ENCODE measurements at regions of chr2 and their contacts with region 1.

Region 1: GRCh38 chr2:60881047-60881932 is at the start of gene REL:
- DNase-seq: peak; percentile 80 to 98 (median 89)
- ATAC-seq: peak; percentile 78
- H3K4me3 ChIP-seq: peak within 1 kb of the TSS; percentile 85 to 99
- H3K4me3 Mint-ChIP-seq: peak within 1 kb of the TSS; percentile 93
- H3K27ac ChIP-seq: peak within 1 kb of the TSS; percentile 97 to 100
- H3K27ac Mint-ChIP-seq: peak within 1 kb of the TSS; percentile 99
- H3K4me1 ChIP-seq: peaks cover 34% of the 10 kb centered on the region
- H3K4me1 Mint-ChIP-seq: peaks cover 30% of the 10 kb centered on the region
- H3K27me3 ChIP-seq: no peaks in the 10 kb centered on the region
- H3K27me3 Mint-ChIP-seq: no peaks in the 10 kb centered on the region
- CTCF ChIP-seq: no peak
- total RNA-seq, gene REL: 202 to 205 TPM

Region 2: DNA sequence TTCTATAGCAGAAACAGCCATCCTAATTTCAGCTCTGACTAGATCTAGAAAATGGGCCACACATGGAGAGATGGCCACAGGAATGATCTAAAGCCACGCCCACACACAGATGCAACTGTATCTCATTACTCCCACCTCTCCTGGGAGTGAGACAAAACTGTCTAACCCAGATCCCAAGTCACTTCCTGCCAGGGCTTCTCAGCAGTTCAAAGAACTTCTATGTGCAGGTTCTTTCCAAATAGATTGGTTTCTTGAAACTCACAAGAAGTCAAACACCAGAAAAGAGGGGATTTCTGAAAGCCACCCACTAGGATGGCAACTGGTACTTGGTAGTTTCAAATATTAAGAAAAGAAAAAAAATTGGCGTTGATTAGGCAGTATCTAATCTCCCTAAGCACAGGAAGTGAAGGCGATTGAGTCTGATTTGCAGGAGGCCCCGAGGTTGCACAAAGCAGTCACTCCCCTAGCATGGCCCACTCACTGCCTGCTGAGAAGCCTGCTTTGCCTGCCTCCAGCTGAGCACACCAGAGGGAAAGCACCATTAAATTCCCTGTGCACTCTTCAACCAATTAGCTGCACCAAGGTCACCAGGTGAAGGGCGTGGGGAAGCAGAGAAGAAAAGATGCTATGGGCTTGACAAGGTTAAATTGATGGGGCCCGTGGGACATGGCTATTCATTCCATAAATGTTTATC is 74.2 kb before region 1 on chr2:
- CTCF ChIA-PET with region 1: interaction called, 12 read pairs
- POLR2A ChIA-PET with region 1: interaction called, 5 read pairs
- intact Hi-C with region 1: loop called in 1 of 2 experiments (anchors 2 kb)
- DNase-seq: peak in 6 of 9 experiments; percentile 23 to 80 (median 52)
- ATAC-seq: peak; percentile 75
- H3K4me3 ChIP-seq: no peak overlapping the region
- H3K4me3 Mint-ChIP-seq: peak overlapping the region; percentile 40
- H3K27ac ChIP-seq: peak overlapping the region; percentile 31 to 57
- H3K27ac Mint-ChIP-seq: peak overlapping the region; percentile 90
- H3K4me1 ChIP-seq: peaks cover 24% of the 10 kb centered on the region
- H3K4me1 Mint-ChIP-seq: peaks cover 41% of the 10 kb centered on the region
- H3K27me3 ChIP-seq: no peaks in the 10 kb centered on the region
- H3K27me3 Mint-ChIP-seq: no peaks in the 10 kb centered on the region
- CTCF ChIP-seq: no peak

Region 3: GRCh38 chr2:60899230-60899891 is 18.1 kb after region 1 on chr2:
- CTCF ChIA-PET with region 1: no interaction called
- POLR2A ChIA-PET with region 1: interaction called, 3 read pairs
- intact Hi-C with region 1: loop called in 1 of 2 experiments (anchors 2 kb)
- DNase-seq: peak in 2 of 9 experiments; percentile 24 to 59
- ATAC-seq: peak; percentile 31
- H3K4me3 ChIP-seq: no peak overlapping the region
- H3K4me3 Mint-ChIP-seq: no peak overlapping the region
- H3K27ac ChIP-seq: peak overlapping the region in 1 of 2 experiments; percentile 2
- H3K27ac Mint-ChIP-seq: no peak overlapping the region
- H3K4me1 ChIP-seq: peaks cover 7% of the 10 kb centered on the region
- H3K4me1 Mint-ChIP-seq: peaks cover 18% of the 10 kb centered on the region
- H3K27me3 ChIP-seq: no peaks in the 10 kb centered on the region
- H3K27me3 Mint-ChIP-seq: no peaks in the 10 kb centered on the region
- CTCF ChIP-seq: no peak

Region 4: GRCh38 chr2:61016808-61017555 is 135.7 kb after region 1 on chr2:
- CTCF ChIA-PET with region 1: no interaction called
- POLR2A ChIA-PET with region 1: interaction called, 7 read pairs
- intact Hi-C with region 1: loop called (anchors 1 to 5 kb)
- DNase-seq: peak; percentile 30 to 81 (median 67)
- ATAC-seq: peak; percentile 69
- H3K4me3 ChIP-seq: peak overlapping the region; percentile 80 to 99
- H3K4me3 Mint-ChIP-seq: peak overlapping the region; percentile 99
- H3K27ac ChIP-seq: peak overlapping the region; percentile 69 to 84
- H3K27ac Mint-ChIP-seq: peak overlapping the region; percentile 95
- H3K4me1 ChIP-seq: peaks cover 21% of the 10 kb centered on the region
- H3K4me1 Mint-ChIP-seq: peaks cover 46% of the 10 kb centered on the region
- H3K27me3 ChIP-seq: no peaks in the 10 kb centered on the region
- H3K27me3 Mint-ChIP-seq: no peaks in the 10 kb centered on the region
- CTCF ChIP-seq: no peak

Region 5: DNA sequence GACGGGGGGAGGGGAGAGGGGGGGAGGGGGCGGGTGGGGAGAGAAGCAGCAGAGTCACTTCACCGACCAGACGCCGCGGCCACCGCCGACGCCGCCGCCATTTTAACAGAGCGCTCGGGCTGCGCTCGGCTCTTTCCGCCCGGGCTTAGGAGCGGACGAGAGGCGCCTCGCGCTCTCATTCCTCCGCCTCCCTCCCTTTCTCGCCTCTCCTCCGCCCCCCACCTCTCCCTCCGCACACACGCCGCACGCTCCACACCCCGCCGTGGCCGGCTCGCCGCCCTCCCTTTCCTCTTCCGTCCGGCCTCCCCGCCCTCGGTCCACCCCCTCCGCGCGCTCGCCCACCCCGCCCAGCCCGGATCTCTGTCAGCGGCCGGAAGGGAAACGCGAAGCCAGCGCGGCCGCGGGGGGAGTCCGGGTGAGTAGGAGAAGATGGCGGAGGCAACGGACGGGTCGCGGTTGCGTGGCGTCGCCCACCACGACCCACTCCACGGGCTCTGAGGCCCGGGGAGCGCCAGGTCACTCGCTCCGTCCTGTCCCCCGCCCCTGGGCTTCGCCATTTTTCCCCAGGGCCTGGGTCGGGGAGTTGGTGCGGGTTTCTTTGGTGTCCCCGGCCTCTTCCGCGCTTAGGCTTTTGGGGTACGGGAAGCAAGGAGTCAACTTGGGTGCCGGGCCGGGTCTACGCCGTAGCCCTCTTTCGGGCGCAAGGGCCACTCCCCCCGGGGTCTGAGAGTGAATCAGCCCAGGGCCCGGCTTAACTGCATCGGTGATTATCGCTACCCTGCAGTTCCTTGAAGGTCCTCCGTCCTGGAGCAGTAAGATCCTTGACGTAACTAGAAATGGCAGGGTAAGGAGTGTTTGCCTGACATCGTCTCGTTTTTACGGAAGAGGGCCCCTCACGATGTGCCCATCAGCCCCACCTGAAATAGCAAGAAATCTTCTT is 589.9 kb after region 1 on chr2 and contains the start of gene USP34:
- CTCF ChIA-PET with region 1: no interaction called
- POLR2A ChIA-PET with region 1: no interaction called
- intact Hi-C with region 1: loop called in 1 of 2 experiments (anchors 5 kb)
- DNase-seq: peak; percentile 90 to 98 (median 93)
- ATAC-seq: peak; percentile 85
- H3K4me3 ChIP-seq: peak within 1 kb of the TSS; percentile 77 to 99
- H3K4me3 Mint-ChIP-seq: peak within 1 kb of the TSS; percentile 92
- H3K27ac ChIP-seq: peak within 1 kb of the TSS; percentile 89 to 100
- H3K27ac Mint-ChIP-seq: peak within 1 kb of the TSS; percentile 98
- H3K4me1 ChIP-seq: peaks cover 35% of the 10 kb centered on the region
- H3K4me1 Mint-ChIP-seq: peaks cover 34% of the 10 kb centered on the region
- H3K27me3 ChIP-seq: no peaks in the 10 kb centered on the region
- H3K27me3 Mint-ChIP-seq: no peaks in the 10 kb centered on the region
- CTCF ChIP-seq: no peak
- total RNA-seq, gene USP34: 99.6 to 103 TPM

Region 6: DNA sequence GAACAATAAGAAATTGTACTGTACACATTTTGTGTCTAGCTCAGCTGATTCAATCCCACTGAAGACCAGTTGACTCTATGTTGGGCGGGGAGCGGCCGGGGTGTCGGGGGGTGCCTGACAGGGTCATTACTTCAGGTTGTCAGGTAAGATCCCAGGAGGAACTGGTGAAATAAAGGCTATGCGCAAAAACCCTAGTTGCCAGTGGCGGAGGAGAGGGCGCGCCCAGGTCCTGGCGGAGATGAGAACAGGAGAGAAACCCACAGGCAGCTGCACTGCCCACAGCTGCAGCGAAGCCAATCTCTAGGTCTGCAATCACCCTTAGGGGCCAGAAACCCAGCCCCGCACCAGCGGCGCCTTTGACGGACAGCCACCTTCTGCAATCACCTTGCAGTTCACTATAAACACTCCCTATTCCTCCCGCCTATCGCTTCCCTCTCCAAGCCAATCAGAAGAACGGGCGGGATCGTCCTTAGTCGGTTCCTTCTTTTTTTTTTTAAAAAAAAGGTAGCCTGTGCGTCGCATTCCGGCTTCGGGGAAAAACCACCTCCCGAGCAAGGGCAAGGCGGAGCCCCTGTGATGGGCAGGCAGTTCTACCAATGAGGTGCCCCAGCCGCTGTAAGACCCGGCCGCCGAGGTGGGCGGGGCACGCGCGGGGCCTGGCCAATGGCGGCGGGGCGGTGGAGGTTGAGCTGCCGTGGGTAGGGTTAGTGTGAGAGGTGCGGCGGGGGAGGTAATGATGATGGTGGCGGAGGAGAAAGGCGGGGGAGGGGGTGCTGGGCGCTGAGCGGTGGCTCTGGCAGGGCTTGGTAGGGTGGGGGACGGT is 1823.9 kb after region 1 on chr2 and contains the start of gene EHBP1:
- CTCF ChIA-PET with region 1: no interaction called
- POLR2A ChIA-PET with region 1: no interaction called
- intact Hi-C with region 1: loop called in 1 of 2 experiments (anchors 5 kb)
- DNase-seq: peak; percentile 93 to 99 (median 97)
- ATAC-seq: peak; percentile 96
- H3K4me3 ChIP-seq: peak within 1 kb of the TSS; percentile 74 to 77
- H3K4me3 Mint-ChIP-seq: peak within 1 kb of the TSS; percentile 85
- H3K27ac ChIP-seq: peak within 1 kb of the TSS; percentile 36 to 65
- H3K27ac Mint-ChIP-seq: peak within 1 kb of the TSS; percentile 79
- H3K4me1 ChIP-seq: peaks cover 11% of the 10 kb centered on the region
- H3K4me1 Mint-ChIP-seq: peaks cover 41% of the 10 kb centered on the region
- H3K27me3 ChIP-seq: no peaks in the 10 kb centered on the region
- H3K27me3 Mint-ChIP-seq: no peaks in the 10 kb centered on the region
- CTCF ChIP-seq: no peak
- total RNA-seq, gene EHBP1: 16.2 to 16.7 TPM